Heart left ventricle (tissue), 16 donors: ENCODE measurements at regions of chr4 and their contacts with region 1.

Region 1: DNA sequence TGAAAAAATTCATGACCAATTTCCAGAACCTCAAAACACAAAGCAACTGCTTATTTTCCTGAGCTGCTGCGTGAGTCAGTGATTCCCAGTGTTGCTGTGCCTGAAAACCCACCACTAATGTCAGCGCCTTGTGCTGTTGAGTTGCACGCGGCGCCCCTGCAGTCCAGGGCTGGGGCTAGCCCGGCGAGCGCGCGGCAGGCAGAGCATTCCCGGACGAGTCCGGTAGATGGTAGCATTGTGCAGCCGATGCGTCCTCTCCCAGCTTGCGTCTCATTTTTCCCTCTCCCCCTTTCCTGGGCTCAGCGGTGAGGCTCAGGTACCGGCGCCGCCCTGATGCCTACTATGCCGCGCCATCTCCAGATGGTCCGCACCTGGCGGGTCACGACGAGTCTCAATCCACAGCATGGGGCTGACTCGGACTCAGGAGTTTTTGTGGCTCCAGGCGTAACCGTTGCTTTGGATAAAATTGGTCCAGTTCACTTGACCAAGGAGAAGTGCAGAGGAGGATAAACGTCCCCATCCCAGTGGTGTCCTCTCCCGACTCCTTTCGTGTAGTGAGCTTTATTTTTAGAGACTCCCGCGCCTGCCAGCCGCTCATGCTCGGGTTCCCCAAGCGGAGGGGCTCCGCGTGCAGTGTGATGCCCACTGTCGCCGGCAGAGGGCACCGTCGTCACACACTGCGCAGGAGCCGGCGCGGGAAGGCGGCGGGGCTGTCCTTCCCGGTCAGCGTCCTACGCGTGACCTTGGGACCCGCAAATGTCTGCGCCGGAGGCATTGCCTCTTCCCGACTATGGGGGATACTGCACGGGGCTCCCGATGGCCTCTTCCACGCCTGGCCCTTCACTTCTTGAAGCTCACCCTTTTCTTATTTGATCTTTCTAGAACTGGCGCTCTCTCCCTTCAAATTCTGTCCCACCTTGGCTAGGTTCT is 53.6 kb upstream of the IGFBP7 start:
- DNase-seq: peak; percentile 78 to 91 (median 82)
- ATAC-seq: peak; percentile 94 to 97 (median 96)
- H3K4me3 ChIP-seq: peak overlapping the region; percentile 44 to 82 (median 61)
- H3K27ac ChIP-seq: peak overlapping the region in 11 of 12 donors; percentile 47 to 83 (median 74)
- H3K4me1 ChIP-seq: peaks cover 0 to 12% (median 5%) of the 10 kb centered on the region in 12 donors
- H3K27me3 ChIP-seq: peaks cover 0 to 6% (median 0%) of the 10 kb centered on the region in 9 donors
- CTCF ChIP-seq: peak; percentile 71 to 93 (median 84)
- POLR2A ChIP-seq: no peak

Region 2: GRCh38 chr4:57037982-57038604 is 125.7 kb before region 1 on chr4:
- intact Hi-C with region 1: loop called in 9 of 10 experiments (anchors 2 to 10 kb)
- DNase-seq: peak; percentile 61 to 84 (median 67)
- ATAC-seq: peak; percentile 57 to 79 (median 66)
- H3K4me3 ChIP-seq: no peak overlapping the region
- H3K27ac ChIP-seq: peak overlapping the region in 3 of 12 donors; percentile 6 to 19 (median 18)
- H3K4me1 ChIP-seq: peaks cover 1 to 42% (median 19%) of the 10 kb centered on the region in 12 donors
- H3K27me3 ChIP-seq: no peaks in the 10 kb centered on the region
- CTCF ChIP-seq: peak; percentile 61 to 94 (median 82)
- POLR2A ChIP-seq: no peak

Region 3: DNA sequence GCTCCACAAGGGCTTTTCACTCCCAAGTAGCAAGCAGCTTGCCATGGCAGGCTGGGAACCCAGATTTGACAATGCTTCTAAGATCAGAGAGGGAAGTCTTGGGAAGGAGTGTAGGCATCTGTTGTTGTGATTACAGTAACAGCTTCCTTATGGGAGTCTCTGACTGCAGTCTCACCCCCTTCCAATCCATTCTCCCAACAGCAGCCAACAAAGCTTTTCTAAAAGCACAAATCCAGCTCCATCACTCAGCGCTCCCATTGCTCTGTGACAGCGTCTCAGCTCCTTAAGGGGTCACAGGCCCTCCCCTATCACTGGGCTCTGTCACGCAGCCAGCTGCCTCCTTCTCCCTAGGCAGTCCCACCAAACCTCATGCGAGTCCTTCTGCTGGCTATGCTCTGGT is 60.7 kb before region 1 on chr4:
- intact Hi-C with region 1: no loop called
- DNase-seq: peak in 4 of 5 donors; percentile 55 to 73 (median 64)
- ATAC-seq: peak; percentile 14 to 43 (median 24)
- H3K4me3 ChIP-seq: peak overlapping the region in 3 of 12 donors; percentile 4 to 29 (median 19)
- H3K27ac ChIP-seq: peak overlapping the region; percentile 65 to 97 (median 86)
- H3K4me1 ChIP-seq: peaks cover 32 to 98% (median 85%) of the 10 kb centered on the region in 12 donors
- H3K27me3 ChIP-seq: no peaks in the 10 kb centered on the region
- CTCF ChIP-seq: no peak
- POLR2A ChIP-seq: no peak

Region 4: DNA sequence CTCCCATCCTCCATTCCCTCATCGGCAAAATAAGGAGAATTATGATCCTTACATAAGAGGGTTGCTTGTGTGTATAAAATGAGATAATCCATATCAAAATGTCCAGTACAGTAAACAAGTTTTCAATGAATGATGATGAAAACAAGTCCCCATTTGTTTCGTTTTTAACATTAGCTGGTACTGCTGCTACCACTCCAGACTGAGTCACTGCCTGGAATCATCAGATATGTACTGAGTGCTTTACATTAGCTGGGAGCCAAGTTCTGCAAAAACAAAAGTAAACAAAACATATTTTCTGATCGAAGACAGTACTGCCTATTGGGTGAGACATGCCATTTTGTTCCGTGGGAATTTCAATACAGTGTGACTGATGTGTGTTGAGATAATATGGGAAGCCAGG is 69.6 kb after region 1 on chr4:
- intact Hi-C with region 1: no loop called
- DNase-seq: no peak
- ATAC-seq: peak in 1 of 4 donors; percentile 52
- H3K4me3 ChIP-seq: no peak overlapping the region
- H3K27ac ChIP-seq: no peak overlapping the region
- H3K4me1 ChIP-seq: no peaks in the 10 kb centered on the region
- H3K27me3 ChIP-seq: peaks cover 0 to 5% (median 0%) of the 10 kb centered on the region in 9 donors
- CTCF ChIP-seq: no peak
- POLR2A ChIP-seq: no peak

Region 5: GRCh38 chr4:57265831-57266582 is 102.2 kb after region 1 on chr4:
- intact Hi-C with region 1: loop called in 3 of 10 experiments (anchors 2 to 10 kb)
- DNase-seq: peak in 2 of 5 donors; percentile 41 to 48
- ATAC-seq: peak; percentile 66 to 81 (median 72)
- H3K4me3 ChIP-seq: no peak overlapping the region
- H3K27ac ChIP-seq: no peak overlapping the region
- H3K4me1 ChIP-seq: peaks cover 0 to 19% (median 6%) of the 10 kb centered on the region in 12 donors
- H3K27me3 ChIP-seq: no peaks in the 10 kb centered on the region
- CTCF ChIP-seq: peak in 3 of 12 donors; percentile 10 to 21 (median 15)
- POLR2A ChIP-seq: no peak

Region 6: GRCh38 chr4:57405385-57405784 is 241.6 kb after region 1 on chr4:
- intact Hi-C with region 1: no loop called
- DNase-seq: no peak
- ATAC-seq: no peak
- H3K4me3 ChIP-seq: no peak overlapping the region
- H3K27ac ChIP-seq: no peak overlapping the region
- H3K4me1 ChIP-seq: no peaks in the 10 kb centered on the region
- H3K27me3 ChIP-seq: no peaks in the 10 kb centered on the region
- CTCF ChIP-seq: no peak
- POLR2A ChIP-seq: no peak

Region 7: DNA sequence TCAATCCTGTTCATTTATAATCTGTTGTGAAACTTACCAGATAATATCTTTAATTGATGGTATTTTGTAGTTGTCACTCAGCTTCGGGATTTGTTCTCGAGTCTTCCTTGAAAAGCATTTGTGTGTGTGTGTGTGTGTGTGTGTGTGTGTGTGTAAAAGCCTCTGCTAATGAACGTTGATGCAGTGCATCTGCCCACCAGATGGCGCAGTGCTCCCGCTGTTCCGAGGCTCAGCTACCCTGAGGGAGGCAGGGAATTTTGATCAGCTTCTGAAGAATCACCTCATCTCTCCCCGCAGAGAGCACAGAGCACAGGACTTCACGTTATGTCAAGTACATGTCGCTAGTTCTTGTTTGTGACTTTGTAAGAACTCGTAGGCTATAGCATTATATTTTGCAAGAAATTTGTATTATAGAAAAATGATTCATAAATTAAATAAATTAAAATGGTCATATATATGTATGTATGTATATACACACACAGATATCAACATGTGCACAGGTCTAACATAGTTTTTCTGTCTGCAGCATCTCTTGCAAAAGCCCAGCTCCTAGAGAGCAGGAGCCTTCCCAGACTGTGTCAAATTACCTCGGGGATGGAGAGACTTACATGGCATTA is 263.1 kb after region 1 on chr4:
- intact Hi-C with region 1: loop called in 7 of 10 experiments (anchors 5 to 10 kb)
- DNase-seq: peak; percentile 37 to 73 (median 54)
- ATAC-seq: peak in 3 of 4 donors; percentile 77 to 83 (median 83)
- H3K4me3 ChIP-seq: no peak overlapping the region
- H3K27ac ChIP-seq: no peak overlapping the region
- H3K4me1 ChIP-seq: no peaks in the 10 kb centered on the region
- H3K27me3 ChIP-seq: peaks cover 0 to 7% (median 0%) of the 10 kb centered on the region in 9 donors
- CTCF ChIP-seq: peak; percentile 22 to 65 (median 57)
- POLR2A ChIP-seq: no peak

Region 8: GRCh38 chr4:57734104-57734670 is 570.4 kb after region 1 on chr4:
- intact Hi-C with region 1: loop called in 1 of 10 experiments (anchors 10 kb)
- DNase-seq: peak in 2 of 5 donors; percentile 9 to 22
- ATAC-seq: peak; percentile 97 to 99 (median 98)
- H3K4me3 ChIP-seq: no peak overlapping the region
- H3K27ac ChIP-seq: no peak overlapping the region
- H3K4me1 ChIP-seq: peaks cover 0 to 6% (median 0%) of the 10 kb centered on the region in 12 donors
- H3K27me3 ChIP-seq: no peaks in the 10 kb centered on the region
- CTCF ChIP-seq: no peak
- POLR2A ChIP-seq: no peak